Mammary epithelial cell (primary cell): ENCODE measurements at regions of chr18 and their contacts with region 1.

Region 1: GRCh38 chr18:3281456-3282400 is 19.8 kb downstream of the MYL12B start:
- DNase-seq: peak; percentile 68
- H3K4me3 ChIP-seq: no peak overlapping the region
- H3K27ac ChIP-seq: no peak overlapping the region
- H3K4me1 ChIP-seq: no peaks in the 10 kb centered on the region
- H3K27me3 ChIP-seq: no peaks in the 10 kb centered on the region
- CTCF ChIP-seq: peak; percentile 36 to 53

Region 2: GRCh38 chr18:3380384-3380961 is 98.7 kb after region 1 on chr18:
- CTCF ChIA-PET with region 1: no interaction called
- dilution Hi-C with region 1: no loop called
- in situ Hi-C with region 1: no loop called
- intact Hi-C with region 1: loop called (anchors 5 kb)
- DNase-seq: peak; percentile 82
- H3K4me3 ChIP-seq: no peak overlapping the region
- H3K27ac ChIP-seq: peak overlapping the region; percentile 51
- H3K4me1 ChIP-seq: peaks cover 11% of the 10 kb centered on the region
- H3K27me3 ChIP-seq: no peaks in the 10 kb centered on the region
- CTCF ChIP-seq: peak; percentile 36 to 42

Region 3: GRCh38 chr18:3579701-3580100 is 298.0 kb after region 1 on chr18:
- CTCF ChIA-PET with region 1: interaction called, 12 read pairs
- dilution Hi-C with region 1: no loop called
- in situ Hi-C with region 1: loop called in 1 of 2 experiments (anchors 10 kb)
- intact Hi-C with region 1: loop called (anchors 2 kb)
- DNase-seq: peak; percentile 84
- H3K4me3 ChIP-seq: no peak overlapping the region
- H3K27ac ChIP-seq: peak overlapping the region; percentile 42
- H3K4me1 ChIP-seq: peaks cover 17% of the 10 kb centered on the region
- H3K27me3 ChIP-seq: no peaks in the 10 kb centered on the region
- CTCF ChIP-seq: no peak

Region 4: GRCh38 chr18:3593904-3594661 is 312.4 kb after region 1 on chr18:
- CTCF ChIA-PET with region 1: no interaction called
- dilution Hi-C with region 1: no loop called
- in situ Hi-C with region 1: no loop called
- intact Hi-C with region 1: loop called (anchors 1 kb)
- DNase-seq: peak; percentile 87
- H3K4me3 ChIP-seq: peak overlapping the region; percentile 45 to 56 (median 53)
- H3K27ac ChIP-seq: peak overlapping the region; percentile 99
- H3K4me1 ChIP-seq: peaks cover 49% of the 10 kb centered on the region
- H3K27me3 ChIP-seq: no peaks in the 10 kb centered on the region
- CTCF ChIP-seq: peak; percentile 92 to 95

Region 5: DNA sequence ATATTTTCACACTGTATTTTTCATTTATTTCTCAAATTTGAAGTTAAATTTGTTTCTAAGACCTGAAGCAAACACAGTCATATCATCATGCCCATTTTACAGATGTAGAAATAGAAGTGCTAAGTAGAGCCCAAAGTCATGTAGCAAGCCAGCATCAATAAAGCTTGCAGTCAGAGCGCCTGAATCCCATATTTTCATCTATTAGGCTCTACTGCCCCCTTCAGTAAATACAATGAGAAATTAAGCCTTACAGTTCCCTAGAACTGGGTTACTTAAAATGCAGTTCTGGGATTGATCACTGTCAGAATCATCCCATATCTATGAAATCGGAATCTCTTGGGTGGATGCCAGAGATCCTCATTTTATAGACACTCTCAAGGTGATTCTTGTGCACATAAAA is 588.1 kb after region 1 on chr18:
- CTCF ChIA-PET with region 1: no interaction called
- dilution Hi-C with region 1: no loop called
- in situ Hi-C with region 1: loop called in 1 of 2 experiments (anchors 25 kb)
- intact Hi-C with region 1: loop called (anchors 1 kb)
- DNase-seq: peak; percentile 37
- H3K4me3 ChIP-seq: no peak overlapping the region
- H3K27ac ChIP-seq: no peak overlapping the region
- H3K4me1 ChIP-seq: no peaks in the 10 kb centered on the region
- H3K27me3 ChIP-seq: peaks cover 1% of the 10 kb centered on the region
- CTCF ChIP-seq: peak; percentile 46 to 59

Region 6: GRCh38 chr18:4578449-4578848 is 1296.7 kb after region 1 on chr18:
- CTCF ChIA-PET with region 1: no interaction called
- dilution Hi-C with region 1: no loop called
- in situ Hi-C with region 1: no loop called
- intact Hi-C with region 1: no loop called
- DNase-seq: no peak
- H3K4me3 ChIP-seq: no peak overlapping the region
- H3K27ac ChIP-seq: no peak overlapping the region
- H3K4me1 ChIP-seq: no peaks in the 10 kb centered on the region
- H3K27me3 ChIP-seq: no peaks in the 10 kb centered on the region
- CTCF ChIP-seq: no peak